ENCODE measurements at regions of chr7 and their contacts with region 1.

Region 1: DNA sequence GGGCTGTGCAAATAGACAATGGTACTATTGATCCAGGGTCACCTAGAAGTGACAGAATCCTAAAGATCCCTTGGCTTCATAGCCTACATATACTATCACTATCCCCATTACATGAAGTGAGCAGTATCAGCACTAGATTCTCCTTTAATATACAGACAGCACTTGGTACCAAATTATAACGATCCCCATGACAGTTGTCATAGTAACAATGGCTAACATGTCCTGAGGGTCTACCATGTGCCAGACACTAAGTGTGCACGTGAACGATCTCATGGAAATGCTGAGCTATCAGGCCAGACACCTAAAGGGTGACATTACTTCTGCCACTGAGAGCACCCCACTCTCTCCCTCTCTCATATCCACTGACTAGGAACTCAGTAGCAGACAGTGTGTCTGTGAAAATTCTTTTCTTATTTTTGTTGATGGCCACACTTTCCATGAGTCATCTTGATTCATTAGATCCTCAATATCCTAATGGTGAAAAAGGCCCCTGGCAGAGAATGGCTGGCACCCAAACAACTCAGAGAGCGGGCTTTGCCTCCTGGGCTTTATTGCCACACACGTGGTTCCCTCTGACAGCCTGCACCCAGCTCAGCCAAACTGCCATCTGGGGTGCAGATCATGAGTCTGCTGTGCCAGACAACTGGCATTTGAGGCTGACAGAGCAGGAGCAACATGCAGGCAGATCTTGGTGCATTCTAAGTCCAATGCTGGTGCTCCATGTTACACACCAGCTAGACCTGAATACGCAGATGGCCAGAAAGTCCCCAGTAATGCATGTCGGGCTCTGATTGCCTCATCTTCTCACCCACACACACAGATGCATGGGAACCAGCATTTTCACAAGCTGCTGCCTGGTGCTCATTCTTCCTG is 176.3 kb downstream of the DGKI start:
- DNase-seq: peak; percentile 90
- H3K4me3 Mint-ChIP-seq: no peak overlapping the region
- H3K27ac Mint-ChIP-seq: peak overlapping the region; percentile 33
- H3K4me1 Mint-ChIP-seq: peaks cover 41% of the 10 kb centered on the region
- H3K27me3 Mint-ChIP-seq: no peaks in the 10 kb centered on the region
- CTCF ChIP-seq: no peak

Region 2: DNA sequence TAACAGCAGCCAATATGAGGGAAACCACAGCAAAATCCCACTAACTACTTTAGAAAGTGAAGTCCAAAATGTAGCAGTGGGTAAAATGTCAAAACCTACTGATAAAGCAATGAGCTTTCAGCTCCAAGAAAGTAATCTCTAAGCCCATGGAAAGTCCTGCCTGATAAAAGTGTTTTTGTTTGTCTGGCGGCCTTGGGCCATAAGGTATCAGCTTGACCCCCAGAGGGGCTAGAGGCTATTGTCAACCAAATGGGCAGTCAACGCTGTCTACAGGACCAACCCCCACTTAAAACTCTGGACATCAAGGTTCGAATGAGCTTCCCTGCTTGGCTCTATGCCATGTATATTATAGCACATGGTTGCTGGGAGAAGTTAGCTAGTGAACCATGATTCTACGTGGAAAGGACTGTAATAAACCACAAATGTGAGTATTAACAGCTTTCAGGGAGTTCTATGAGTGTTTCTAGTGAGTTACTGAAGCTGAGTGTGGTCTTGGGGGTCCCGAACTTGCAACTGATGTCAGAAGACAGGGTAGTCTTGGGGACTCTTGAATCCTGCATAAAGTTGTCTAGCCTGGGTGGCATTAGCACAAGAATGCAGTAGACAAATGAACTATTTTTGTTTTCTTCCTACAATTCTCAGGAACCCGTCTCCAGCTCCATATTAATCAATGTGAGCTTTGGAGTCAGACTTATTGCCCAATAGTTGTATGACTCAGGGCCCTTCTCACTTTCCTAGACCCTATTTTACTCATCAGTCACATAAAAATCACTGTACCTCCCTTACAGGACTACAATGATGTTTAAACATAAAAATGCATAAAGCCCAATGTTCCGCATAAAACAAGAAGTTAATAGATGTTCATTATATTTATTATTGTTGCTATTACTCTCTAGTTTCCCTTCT is 11.5 kb after region 1 on chr7:
- CTCF ChIA-PET with region 1: interaction called, 8 read pairs
- POLR2A ChIA-PET with region 1: interaction called, 13 read pairs
- intact Hi-C with region 1: no loop called
- DNase-seq: peak; percentile 82
- H3K4me3 Mint-ChIP-seq: no peak overlapping the region
- H3K27ac Mint-ChIP-seq: peak overlapping the region; percentile 3
- H3K4me1 Mint-ChIP-seq: peaks cover 21% of the 10 kb centered on the region
- H3K27me3 Mint-ChIP-seq: no peaks in the 10 kb centered on the region
- CTCF ChIP-seq: no peak

Region 3: GRCh38 chr7:137820677-137821420 is 150.4 kb after region 1 on chr7:
- CTCF ChIA-PET with region 1: no interaction called
- POLR2A ChIA-PET with region 1: no interaction called
- intact Hi-C with region 1: no loop called
- DNase-seq: peak; percentile 20
- H3K4me3 Mint-ChIP-seq: no peak overlapping the region
- H3K27ac Mint-ChIP-seq: no peak overlapping the region
- H3K4me1 Mint-ChIP-seq: no peaks in the 10 kb centered on the region
- H3K27me3 Mint-ChIP-seq: no peaks in the 10 kb centered on the region
- CTCF ChIP-seq: no peak